ENCODE measurements at regions of chr3 and their contacts with region 1.

Region 1: GRCh38 chr3:61561374-61562041 is at the start of gene PTPRG:
- DNase-seq: peak; percentile 49
- H3K4me3 Mint-ChIP-seq: peak within 1 kb of the TSS; percentile 79
- H3K27ac Mint-ChIP-seq: no peak within 1 kb of the TSS
- H3K4me1 Mint-ChIP-seq: peaks cover 21% of the 10 kb centered on the region
- H3K27me3 Mint-ChIP-seq: peaks cover 60% of the 10 kb centered on the region
- total RNA-seq, gene PTPRG: 0.24 to 0.37 TPM

Region 2: GRCh38 chr3:61251174-61251972 is 310.1 kb before region 1 on chr3 and contains the start of gene FHIT:
- CTCF ChIA-PET with region 1: no interaction called
- intact Hi-C with region 1: loop called (anchors 2 kb)
- DNase-seq: peak; percentile 96
- H3K4me3 Mint-ChIP-seq: peak within 1 kb of the TSS; percentile 91
- H3K27ac Mint-ChIP-seq: peak within 1 kb of the TSS; percentile 87
- H3K4me1 Mint-ChIP-seq: peaks cover 11% of the 10 kb centered on the region
- H3K27me3 Mint-ChIP-seq: peaks cover under 1% of the 10 kb centered on the region
- total RNA-seq, gene FHIT: 20.2 to 22.7 TPM

Region 3: GRCh38 chr3:61541694-61542093 is 19.8 kb before region 1 on chr3:
- CTCF ChIA-PET with region 1: no interaction called
- intact Hi-C with region 1: no loop called
- DNase-seq: no peak
- H3K4me3 Mint-ChIP-seq: no peak overlapping the region
- H3K27ac Mint-ChIP-seq: no peak overlapping the region
- H3K4me1 Mint-ChIP-seq: no peaks in the 10 kb centered on the region
- H3K27me3 Mint-ChIP-seq: peaks cover 10% of the 10 kb centered on the region

Region 4: GRCh38 chr3:61894988-61895935 is 333.8 kb after region 1 on chr3:
- CTCF ChIA-PET with region 1: no interaction called
- intact Hi-C with region 1: loop called (anchors 5 kb)
- DNase-seq: peak; percentile 85
- H3K4me3 Mint-ChIP-seq: no peak overlapping the region
- H3K27ac Mint-ChIP-seq: no peak overlapping the region
- H3K4me1 Mint-ChIP-seq: peaks cover 10% of the 10 kb centered on the region
- H3K27me3 Mint-ChIP-seq: peaks cover 1% of the 10 kb centered on the region

Region 5: DNA sequence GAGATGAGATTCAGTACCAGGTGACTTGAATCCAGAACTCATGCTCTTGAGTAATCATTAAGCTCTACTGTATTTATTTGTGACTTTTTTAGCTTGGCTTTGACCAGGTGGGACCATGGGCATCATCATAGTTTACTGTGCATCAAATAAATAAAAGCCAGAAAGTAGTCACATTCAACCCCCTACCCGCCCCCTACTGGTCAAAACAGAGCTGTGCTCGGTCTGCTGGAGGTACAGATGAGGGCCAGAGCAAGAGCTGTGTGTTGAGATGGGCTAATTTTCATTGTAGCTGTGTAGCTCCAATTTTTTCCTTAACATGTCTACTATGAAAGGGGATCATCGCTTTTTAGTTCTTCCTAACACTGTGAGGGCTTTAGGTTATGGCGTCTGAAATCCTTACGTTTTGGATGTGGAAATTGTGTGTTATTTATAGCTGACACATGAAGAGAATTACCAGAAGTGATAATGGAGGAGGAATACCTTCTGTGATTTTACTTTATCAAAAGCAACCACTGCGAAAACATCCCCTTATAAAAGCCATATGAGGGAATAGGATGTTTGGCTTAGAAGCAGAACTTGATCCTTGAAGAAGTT is 374.9 kb after region 1 on chr3:
- CTCF ChIA-PET with region 1: no interaction called
- intact Hi-C with region 1: loop called (anchors 5 kb)
- DNase-seq: peak; percentile 42
- H3K4me3 Mint-ChIP-seq: no peak overlapping the region
- H3K27ac Mint-ChIP-seq: no peak overlapping the region
- H3K4me1 Mint-ChIP-seq: no peaks in the 10 kb centered on the region
- H3K27me3 Mint-ChIP-seq: peaks cover 7% of the 10 kb centered on the region

Region 6: GRCh38 chr3:62188681-62189383 is 627.3 kb after region 1 on chr3:
- CTCF ChIA-PET with region 1: interaction called, 3 read pairs
- intact Hi-C with region 1: loop called (anchors 5 kb)
- DNase-seq: peak; percentile 81
- H3K4me3 Mint-ChIP-seq: no peak overlapping the region
- H3K27ac Mint-ChIP-seq: no peak overlapping the region
- H3K4me1 Mint-ChIP-seq: peaks cover 3% of the 10 kb centered on the region
- H3K27me3 Mint-ChIP-seq: no peaks in the 10 kb centered on the region

Measured in activated naive CD4-positive, alpha-beta T cell treated with anti-CD3 and anti-CD28 coated beads for 36 hours (primary cell).